ENCODE measurements at regions of chr2 and their contacts with region 1.

Region 1: GRCh38 chr2:37414470-37414949 is 70.1 kb downstream of the QPCT start:
- DNase-seq: no peak
- ATAC-seq: peak; percentile 76 to 96 (median 83)
- H3K4me3 ChIP-seq: no peak overlapping the region
- H3K27ac ChIP-seq: peak overlapping the region; percentile 38
- H3K4me1 ChIP-seq: peaks cover 9% of the 10 kb centered on the region
- H3K27me3 ChIP-seq: no peaks in the 10 kb centered on the region
- CTCF ChIP-seq: peak; percentile 88

Region 2: DNA sequence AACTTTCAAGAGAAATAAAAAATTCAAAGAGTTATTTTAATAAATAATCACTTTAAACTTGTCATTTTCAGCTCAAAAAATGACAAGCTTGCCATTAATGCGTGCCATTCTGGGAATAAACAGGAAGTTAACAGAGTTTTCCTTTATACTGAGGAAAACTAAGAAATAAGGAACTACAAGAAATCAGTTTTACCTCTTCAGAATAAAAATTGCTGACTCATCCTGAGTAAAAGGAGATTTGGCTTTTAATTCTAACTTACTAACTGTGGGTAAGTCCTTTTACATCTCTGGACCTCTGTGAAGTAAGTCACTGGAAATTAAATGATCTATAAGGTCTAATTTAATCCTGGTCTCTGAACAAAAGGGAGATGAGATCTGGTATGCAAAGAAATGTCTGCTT is 199.3 kb before region 1 on chr2:
- intact Hi-C with region 1: no loop called
- DNase-seq: no peak
- ATAC-seq: no peak
- H3K4me3 ChIP-seq: no peak overlapping the region
- H3K27ac ChIP-seq: peak overlapping the region; percentile 28
- H3K4me1 ChIP-seq: peaks cover 6% of the 10 kb centered on the region
- H3K27me3 ChIP-seq: no peaks in the 10 kb centered on the region
- CTCF ChIP-seq: no peak

Region 3: DNA sequence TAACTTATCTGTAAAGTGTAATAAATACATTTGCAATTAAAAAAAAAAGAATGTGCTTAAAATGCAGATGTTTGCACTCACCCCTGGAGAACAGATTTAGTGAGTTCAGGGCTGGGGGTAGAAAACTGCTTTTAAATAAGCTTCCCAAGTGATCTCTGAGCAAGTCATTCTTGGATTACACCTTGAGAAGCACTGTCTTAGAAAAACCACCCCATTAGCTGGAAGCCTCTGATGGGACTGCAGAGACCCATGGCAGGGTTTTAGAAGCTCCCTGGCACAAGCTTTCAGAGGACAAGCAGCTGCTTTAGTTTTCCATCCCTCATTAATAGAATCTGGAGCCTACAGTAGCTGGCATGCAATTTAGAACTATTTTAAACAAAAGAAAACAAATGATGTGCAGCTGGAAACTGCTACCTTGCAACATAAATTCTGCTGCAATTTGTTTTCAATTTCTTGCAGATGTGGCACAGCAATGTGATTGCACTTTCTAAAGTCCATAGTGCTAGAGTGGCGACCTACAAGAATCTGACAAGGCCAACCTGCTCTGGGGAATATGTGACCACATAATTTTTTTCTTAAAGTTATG is 115.4 kb after region 1 on chr2:
- intact Hi-C with region 1: loop called in 1 of 2 experiments (anchors 10 kb)
- DNase-seq: no peak
- ATAC-seq: no peak
- H3K4me3 ChIP-seq: no peak overlapping the region
- H3K27ac ChIP-seq: no peak overlapping the region
- H3K4me1 ChIP-seq: no peaks in the 10 kb centered on the region
- H3K27me3 ChIP-seq: no peaks in the 10 kb centered on the region
- CTCF ChIP-seq: no peak

Region 4: GRCh38 chr2:37664231-37664643 is 249.7 kb after region 1 on chr2:
- intact Hi-C with region 1: loop called in 1 of 2 experiments (anchors 10 kb)
- DNase-seq: no peak
- ATAC-seq: no peak
- H3K4me3 ChIP-seq: peak overlapping the region; percentile 42
- H3K27ac ChIP-seq: peak overlapping the region; percentile 90
- H3K4me1 ChIP-seq: peaks cover 95% of the 10 kb centered on the region
- H3K27me3 ChIP-seq: no peaks in the 10 kb centered on the region
- CTCF ChIP-seq: no peak

Region 5: DNA sequence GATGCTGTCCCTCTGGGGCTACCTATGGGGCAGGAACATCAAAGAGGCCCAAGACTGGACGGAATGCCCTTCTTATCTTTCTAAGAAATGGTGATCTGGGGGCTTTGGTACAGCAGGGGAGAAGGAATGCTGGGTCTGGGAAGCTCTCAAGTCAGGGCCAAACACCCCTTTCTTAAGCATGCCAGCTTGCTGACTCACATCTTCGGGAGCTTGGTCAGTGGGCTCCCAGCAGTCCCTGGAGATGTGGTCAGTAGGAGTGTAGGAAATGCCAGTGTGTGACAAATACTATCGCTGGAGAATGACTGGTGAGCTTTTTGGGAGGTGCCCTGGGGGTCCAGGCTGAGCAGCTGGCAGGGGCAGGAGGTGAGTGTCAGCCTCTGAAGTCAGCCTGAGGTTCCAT is 362.0 kb after region 1 on chr2:
- intact Hi-C with region 1: loop called in 1 of 2 experiments (anchors 5 kb)
- DNase-seq: no peak
- ATAC-seq: no peak
- H3K4me3 ChIP-seq: no peak overlapping the region
- H3K27ac ChIP-seq: peak overlapping the region; percentile 12
- H3K4me1 ChIP-seq: peaks cover 23% of the 10 kb centered on the region
- H3K27me3 ChIP-seq: no peaks in the 10 kb centered on the region
- CTCF ChIP-seq: no peak

Region 6: GRCh38 chr2:37877457-37878315 is 463.2 kb after region 1 on chr2:
- intact Hi-C with region 1: loop called (anchors 2 to 5 kb)
- DNase-seq: no peak
- ATAC-seq: peak; percentile 78 to 95 (median 82)
- H3K4me3 ChIP-seq: no peak overlapping the region
- H3K27ac ChIP-seq: no peak overlapping the region
- H3K4me1 ChIP-seq: peaks cover 5% of the 10 kb centered on the region
- H3K27me3 ChIP-seq: peaks cover 0 to 2% (median 0%) of the 10 kb centered on the region in 3 donors
- CTCF ChIP-seq: peak; percentile 81

Measured in psoas muscle (tissue), 8 donors.